RWPE1 (cell line): ENCODE measurements at regions of chrX and their contacts with region 1.

Region 1: DNA sequence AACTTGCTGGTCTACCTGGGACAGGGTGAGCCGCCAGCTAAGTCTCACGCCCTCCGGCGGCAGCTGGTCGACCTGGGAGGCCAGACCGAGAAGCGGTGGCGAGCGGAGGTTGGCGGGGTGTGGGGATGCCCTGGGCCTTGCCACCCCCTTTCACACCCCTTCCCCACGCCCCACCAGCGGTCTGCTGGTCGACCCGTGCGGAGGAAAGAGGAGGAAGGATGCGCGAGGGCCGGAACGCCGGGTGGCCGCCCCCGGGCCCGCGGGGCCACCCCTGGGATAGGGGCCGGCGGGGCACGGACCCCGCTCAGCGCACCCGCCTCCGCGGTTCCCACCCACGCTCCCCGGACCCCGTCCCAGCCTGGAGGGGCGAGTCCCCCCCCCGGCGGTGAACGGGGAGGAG is 28.3 kb upstream of the DCAF12L1 start:
- DNase-seq: no peak
- H3K27ac ChIP-seq: no peak overlapping the region
- CTCF ChIP-seq: no peak

Region 2: DNA sequence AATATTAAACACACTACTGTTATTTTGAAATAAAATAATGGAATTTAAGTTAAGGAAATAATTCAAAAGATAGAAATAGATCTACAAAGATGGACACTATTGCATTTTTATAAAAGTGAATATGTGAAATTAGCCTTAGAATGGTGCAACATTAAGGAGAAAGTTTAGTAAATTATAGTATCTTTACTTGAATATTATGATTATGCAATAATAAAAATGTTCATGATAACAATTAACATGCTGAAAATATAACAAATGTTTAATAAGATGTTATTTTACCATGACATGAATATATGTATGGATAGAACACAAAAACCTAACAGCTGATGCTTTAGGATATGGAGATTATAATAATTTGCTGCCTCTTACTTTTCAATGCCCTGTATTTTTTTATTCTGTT is 113.5 kb before region 1 on chrX:
- CTCF ChIA-PET with region 1: no interaction called
- POLR2A ChIA-PET with region 1: interaction called, 10 read pairs
- DNase-seq: no peak
- H3K27ac ChIP-seq: no peak overlapping the region
- CTCF ChIP-seq: no peak

Region 3: DNA sequence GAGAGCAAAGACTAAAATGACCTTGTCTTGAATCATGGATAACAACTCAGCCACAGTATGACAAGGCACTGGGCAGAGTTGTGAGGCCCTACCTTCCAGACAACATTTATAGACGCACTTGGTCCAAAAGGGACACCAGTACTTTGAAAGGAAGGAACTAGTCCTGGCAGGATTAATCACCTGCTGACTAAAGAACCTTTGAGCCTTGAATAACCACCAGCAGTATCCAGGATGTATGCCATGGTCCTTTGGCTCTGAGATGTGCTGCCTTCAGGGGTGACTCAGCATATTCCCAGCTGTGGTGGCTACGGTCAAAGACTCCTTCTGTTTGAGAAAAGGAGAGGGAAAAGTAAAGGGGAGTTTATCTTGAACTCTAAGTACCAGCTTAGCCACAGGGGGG is 120.5 kb after region 1 on chrX:
- CTCF ChIA-PET with region 1: no interaction called
- POLR2A ChIA-PET with region 1: no interaction called
- DNase-seq: no peak
- H3K27ac ChIP-seq: no peak overlapping the region
- CTCF ChIP-seq: no peak

Region 4: DNA sequence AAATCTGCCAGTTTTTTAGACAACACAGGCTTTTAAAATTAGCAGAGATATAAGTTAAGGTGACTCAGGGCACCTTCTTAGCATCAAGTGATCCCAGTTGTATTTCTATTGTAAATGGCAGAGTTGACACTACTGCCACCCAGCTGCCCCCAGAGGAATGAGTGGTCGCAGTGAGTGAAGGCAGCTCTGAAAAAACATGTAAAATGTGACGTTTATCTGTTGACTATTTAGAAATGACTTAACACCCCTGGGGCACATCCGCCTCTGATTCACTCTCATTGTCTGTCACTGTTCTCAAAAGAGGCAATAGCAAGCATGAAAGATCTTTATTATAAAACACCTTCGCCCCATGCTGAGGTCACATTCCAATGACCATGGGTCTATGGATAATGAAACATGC is 878.9 kb after region 1 on chrX:
- CTCF ChIA-PET with region 1: no interaction called
- POLR2A ChIA-PET with region 1: no interaction called
- DNase-seq: peak; percentile 0
- H3K27ac ChIP-seq: no peak overlapping the region
- CTCF ChIP-seq: no peak